WTC11 (cell line): ENCODE measurements at regions of chr3 and their contacts with region 1.

Region 1: GRCh38 chr3:50192689-50193141 is 1.3 kb downstream of the GNAT1 start:
- DNase-seq: peak; percentile 95
- ATAC-seq: peak; percentile 46
- H3K4me3 Mint-ChIP-seq: no peak overlapping the region
- H3K27ac Mint-ChIP-seq: no peak overlapping the region
- H3K4me1 Mint-ChIP-seq: peaks cover 6% of the 10 kb centered on the region
- H3K27me3 Mint-ChIP-seq: peaks cover 9% of the 10 kb centered on the region
- CTCF ChIP-seq: peak; percentile 88

Region 2: DNA sequence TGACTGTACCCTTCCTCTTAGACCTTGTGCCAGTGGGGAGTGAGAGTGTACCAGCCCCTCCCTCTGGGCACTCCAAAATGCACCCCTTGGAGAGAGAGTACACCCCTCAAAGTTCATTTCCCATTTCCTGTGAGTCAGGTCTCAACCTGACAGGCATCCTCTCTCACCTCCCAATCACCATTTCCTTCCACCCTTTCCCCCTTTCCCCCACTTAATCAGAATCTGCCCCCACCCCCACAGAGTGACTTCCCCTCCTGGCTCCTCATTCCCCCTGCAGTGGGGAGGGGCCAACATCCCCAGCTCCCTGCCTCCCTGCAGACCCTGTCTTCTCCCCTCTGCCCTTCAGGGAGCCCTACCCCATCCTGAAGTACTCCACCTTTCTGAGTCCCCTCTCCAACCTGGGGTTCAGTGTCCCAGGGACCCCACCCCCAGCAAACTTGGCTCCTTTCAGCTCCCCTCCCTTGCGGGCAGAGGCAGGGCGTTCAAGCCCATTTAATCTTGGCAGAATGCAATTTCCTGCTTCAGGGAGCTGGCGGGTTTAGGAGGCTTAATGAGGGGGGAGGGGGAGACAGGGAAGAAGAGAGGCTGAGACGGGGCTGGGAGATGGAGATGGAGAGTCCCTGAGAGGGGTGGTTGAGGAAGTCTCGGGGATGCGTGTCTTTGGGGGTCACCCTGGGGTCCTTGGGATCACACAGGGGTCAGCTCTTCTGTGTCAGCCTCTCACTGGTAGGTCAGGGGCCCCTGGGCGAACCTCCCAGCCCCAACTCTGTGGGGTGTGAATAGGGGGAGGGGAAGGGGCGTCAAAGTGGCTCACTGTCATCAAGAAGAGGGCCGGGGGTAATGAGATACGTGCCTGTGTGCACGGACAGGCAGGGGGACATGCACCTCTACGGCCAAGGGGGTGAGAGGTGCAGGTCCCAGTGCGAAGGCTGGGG is 54.2 kb before region 1 on chr3:
- CTCF ChIA-PET with region 1: interaction called, 32 read pairs
- POLR2A ChIA-PET with region 1: no interaction called
- DNase-seq: peak; percentile 51
- ATAC-seq: peak; percentile 68
- H3K4me3 Mint-ChIP-seq: peak overlapping the region; percentile 58
- H3K27ac Mint-ChIP-seq: peak overlapping the region; percentile 92
- H3K4me1 Mint-ChIP-seq: peaks cover 49% of the 10 kb centered on the region
- H3K27me3 Mint-ChIP-seq: peaks cover 3% of the 10 kb centered on the region; the same call in 1 of the 2 replicates
- CTCF ChIP-seq: no peak

Region 3: DNA sequence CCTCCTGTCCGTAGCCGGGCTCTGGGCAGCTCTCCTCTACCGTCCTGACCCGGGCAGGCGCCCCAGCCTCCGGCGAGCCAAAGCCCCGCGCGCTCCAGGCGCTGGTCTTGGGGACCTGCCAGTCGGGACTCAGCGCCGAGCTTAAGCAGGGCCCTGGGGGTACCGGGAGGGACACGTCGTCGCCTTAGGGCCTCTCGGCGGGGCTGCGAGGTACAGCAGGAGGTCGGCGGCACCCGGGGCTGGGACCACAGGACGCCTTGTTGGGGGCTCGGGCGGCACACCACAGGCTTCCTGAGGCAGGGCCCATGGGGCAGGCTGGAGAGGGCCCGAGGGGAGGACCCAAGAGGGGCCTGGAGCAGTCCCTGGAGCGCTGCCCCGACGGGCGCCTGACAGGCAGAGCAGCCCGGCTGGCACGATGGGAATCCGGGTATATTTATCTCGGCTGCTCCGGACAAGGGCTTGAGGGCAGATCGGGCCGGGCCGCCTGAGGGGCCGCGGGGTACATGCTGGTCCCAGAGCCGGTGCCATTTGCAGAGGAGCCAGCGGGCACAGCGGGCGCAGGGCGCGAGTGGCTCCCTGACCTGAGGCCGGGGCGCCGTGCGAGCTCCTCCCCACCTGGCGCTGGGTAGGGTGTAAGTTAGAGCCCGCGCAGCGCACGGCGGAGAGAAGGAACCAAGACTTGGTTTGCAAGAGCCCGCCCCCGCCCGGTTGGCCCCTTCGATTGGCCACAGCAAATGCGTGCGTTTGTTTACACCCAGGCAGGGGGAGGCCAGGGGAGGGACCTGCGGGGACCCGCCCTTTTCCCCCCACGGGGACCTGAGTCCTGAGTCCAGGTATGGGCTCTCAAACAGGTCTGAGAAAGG is 12.9 kb after region 1 on chr3:
- CTCF ChIA-PET with region 1: interaction called, 133 read pairs
- POLR2A ChIA-PET with region 1: interaction called, 11 read pairs
- DNase-seq: peak; percentile 87
- ATAC-seq: peak; percentile 70
- H3K4me3 Mint-ChIP-seq: peak overlapping the region; percentile 67
- H3K27ac Mint-ChIP-seq: no peak overlapping the region
- H3K4me1 Mint-ChIP-seq: peaks cover under 1% of the 10 kb centered on the region; the same call in 1 of the 2 replicates
- H3K27me3 Mint-ChIP-seq: peaks cover 38% of the 10 kb centered on the region
- CTCF ChIP-seq: no peak

Region 4: GRCh38 chr3:50235716-50236496 is 43.2 kb after region 1 on chr3 and contains the start of gene GNAI2:
- CTCF ChIA-PET with region 1: interaction called, 604 read pairs
- POLR2A ChIA-PET with region 1: interaction called, 4 read pairs
- DNase-seq: peak; percentile 99
- ATAC-seq: peak; percentile 94
- H3K4me3 Mint-ChIP-seq: peak within 1 kb of the TSS; percentile 97
- H3K27ac Mint-ChIP-seq: peak within 1 kb of the TSS; percentile 93
- H3K4me1 Mint-ChIP-seq: peaks cover 48% of the 10 kb centered on the region
- H3K27me3 Mint-ChIP-seq: no peaks in the 10 kb centered on the region
- CTCF ChIP-seq: no peak
- total RNA-seq, gene GNAI2: 181 to 185 TPM (median 185 TPM) in 3 replicates

Region 5: GRCh38 chr3:50272911-50273693 is 80.4 kb after region 1 on chr3:
- CTCF ChIA-PET with region 1: interaction called, 145 read pairs
- POLR2A ChIA-PET with region 1: interaction called, 5 read pairs
- DNase-seq: peak; percentile 94
- ATAC-seq: peak; percentile 37
- H3K4me3 Mint-ChIP-seq: peak overlapping the region; percentile 67
- H3K27ac Mint-ChIP-seq: no peak overlapping the region
- H3K4me1 Mint-ChIP-seq: peaks cover 38% of the 10 kb centered on the region
- H3K27me3 Mint-ChIP-seq: peaks cover 53% of the 10 kb centered on the region
- CTCF ChIP-seq: peak; percentile 97